ENCODE measurements at regions of chrX and their contacts with region 1.

Region 1: GRCh38 chrX:37976153-37976552 is 30.2 kb upstream of the SYTL5 start:
- DNase-seq: no peak
- ATAC-seq: no peak
- H3K4me3 ChIP-seq: no peak overlapping the region
- H3K27ac ChIP-seq: no peak overlapping the region
- H3K4me1 ChIP-seq: peaks cover 13% of the 10 kb centered on the region
- H3K27me3 ChIP-seq: no peaks in the 10 kb centered on the region
- CTCF ChIP-seq: no peak

Region 2: DNA sequence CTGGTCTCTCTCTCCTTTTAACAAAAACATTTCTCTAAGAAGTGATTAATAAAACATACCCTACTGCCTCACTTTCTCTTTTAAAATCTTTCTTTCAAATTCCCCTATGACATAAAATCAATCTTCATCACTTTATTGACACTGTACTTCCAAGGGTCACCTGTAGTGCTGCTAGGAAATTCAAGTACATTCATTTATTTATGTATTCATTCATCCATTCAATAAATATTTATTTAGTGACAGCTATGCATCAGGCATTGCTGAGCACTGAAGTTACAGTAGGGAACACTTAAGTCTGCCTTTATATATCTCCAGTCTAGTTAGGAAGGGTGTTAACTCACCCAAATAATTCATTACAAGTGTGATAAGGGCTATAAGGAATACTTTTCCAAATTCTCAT is 32.5 kb after region 1 on chrX:
- CTCF ChIA-PET with region 1: no interaction called
- POLR2A ChIA-PET with region 1: no interaction called
- intact Hi-C with region 1: loop called (anchors 1 kb)
- DNase-seq: peak; percentile 66
- ATAC-seq: peak; percentile 69
- H3K4me3 ChIP-seq: no peak overlapping the region
- H3K27ac ChIP-seq: peak overlapping the region; percentile 32
- H3K4me1 ChIP-seq: peaks cover 48% of the 10 kb centered on the region
- H3K27me3 ChIP-seq: no peaks in the 10 kb centered on the region
- CTCF ChIP-seq: peak; percentile 39; the same call in 1 of the 2 replicates